ENCODE measurements at regions of chr10 and their contacts with region 1.

Region 1: DNA sequence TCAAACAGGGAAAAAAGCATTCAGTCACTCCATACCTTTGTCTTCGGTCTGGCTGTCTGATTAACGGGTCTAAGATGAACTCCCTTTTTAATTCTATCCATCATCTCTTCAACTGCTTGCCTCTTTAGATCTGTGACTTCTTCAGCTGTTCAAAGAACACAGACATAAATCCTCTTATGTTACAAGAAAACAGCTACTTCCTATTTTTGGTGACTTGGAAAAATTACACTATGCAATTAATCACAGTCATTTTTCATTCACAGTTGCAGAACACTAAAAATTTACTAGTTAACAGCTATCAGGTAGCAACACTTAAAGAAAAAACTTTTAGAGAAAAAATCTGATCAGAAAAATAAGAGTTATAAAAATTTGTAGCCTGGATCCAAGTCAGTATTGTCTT is 66.0 kb downstream of the ENO4 start:
- DNase-seq: no peak
- ATAC-seq: no peak

Region 2: GRCh38 chr10:115762029-115762428 is 1153.3 kb before region 1 on chr10:
- intact Hi-C with region 1: loop called (anchors 5 kb)
- DNase-seq: no peak
- ATAC-seq: no peak

Region 3: GRCh38 chr10:116849248-116850057 is 65.9 kb before region 1 on chr10 and contains the start of gene ENO4:
- intact Hi-C with region 1: no loop called
- DNase-seq: peak; percentile 83
- ATAC-seq: peak; percentile 89
- total RNA-seq, gene ENO4: 1.2 TPM